Cardiac septum (tissue), 1 donor: ENCODE measurements at regions of chr5 and their contacts with region 1.

Region 1: DNA sequence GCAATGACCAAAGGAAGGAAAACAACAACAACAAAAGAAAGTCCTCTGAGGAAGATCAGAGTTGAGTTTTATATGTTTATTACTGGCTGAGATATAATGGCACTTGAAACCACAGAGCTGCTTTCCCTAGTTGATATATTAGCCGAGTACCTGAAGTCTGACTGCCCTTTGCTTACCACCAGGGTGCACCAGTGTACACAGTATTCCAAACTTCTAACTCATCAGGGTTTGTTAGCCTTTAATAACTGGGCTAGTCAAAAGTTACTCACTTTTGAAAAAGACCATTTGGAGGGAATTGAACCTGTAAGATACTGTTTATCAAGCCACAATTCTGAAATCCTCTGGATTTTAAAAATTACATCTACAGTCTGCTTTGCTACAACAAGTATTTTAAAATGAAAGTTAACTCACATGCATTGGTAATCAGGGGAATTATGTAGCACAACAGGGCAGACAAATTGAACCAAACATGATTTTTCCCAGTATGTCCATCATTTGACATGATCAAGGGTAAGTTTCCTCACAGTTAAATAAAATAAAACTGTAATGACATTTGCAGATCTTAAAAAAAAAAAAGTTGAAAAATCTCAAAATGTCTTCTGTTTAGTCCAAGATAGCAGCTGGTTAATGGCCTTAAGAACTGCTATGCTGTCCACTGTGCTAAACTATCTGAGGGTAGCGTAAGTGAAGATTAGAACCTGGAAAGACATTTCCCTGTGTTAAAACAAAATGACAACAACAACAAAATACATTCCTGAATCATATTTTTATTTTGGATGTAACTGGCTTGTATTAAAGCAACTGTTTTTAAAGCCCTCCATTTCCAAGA is 57.3 kb upstream of the C6 start:
- DNase-seq: no peak

Region 2: GRCh38 chr5:40962208-40962955 is 308.3 kb before region 1 on chr5:
- intact Hi-C with region 1: no loop called
- DNase-seq: no peak

Region 3: GRCh38 chr5:41334758-41335157 is 64.1 kb after region 1 on chr5:
- intact Hi-C with region 1: no loop called
- DNase-seq: no peak

Region 4: DNA sequence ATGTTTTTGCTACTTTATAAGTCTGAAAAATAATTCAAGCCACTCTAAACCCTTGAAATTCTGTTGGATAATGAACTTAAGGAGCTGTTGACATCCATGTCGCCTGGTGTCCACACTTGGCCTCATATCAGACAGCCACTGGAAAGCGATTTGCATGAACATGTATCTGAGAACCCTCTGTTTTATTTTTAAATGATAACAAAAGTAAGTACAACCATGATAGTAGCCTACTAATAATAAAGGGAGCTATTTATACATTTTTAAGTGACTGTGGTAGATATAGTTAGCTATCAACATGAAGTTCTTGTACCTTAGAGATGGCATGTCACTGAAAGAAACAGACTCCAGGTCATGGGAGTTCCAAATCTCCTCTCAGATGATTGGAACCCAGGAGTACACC is 186.5 kb after region 1 on chr5:
- intact Hi-C with region 1: loop called (anchors 5 kb)
- DNase-seq: no peak

Region 5: GRCh38 chr5:41510176-41510831 is 239.7 kb after region 1 on chr5 and contains the start of gene PLCXD3:
- intact Hi-C with region 1: loop called (anchors 5 kb)
- DNase-seq: peak; percentile 76
- total RNA-seq, gene PLCXD3: 63.8 TPM

Region 6: DNA sequence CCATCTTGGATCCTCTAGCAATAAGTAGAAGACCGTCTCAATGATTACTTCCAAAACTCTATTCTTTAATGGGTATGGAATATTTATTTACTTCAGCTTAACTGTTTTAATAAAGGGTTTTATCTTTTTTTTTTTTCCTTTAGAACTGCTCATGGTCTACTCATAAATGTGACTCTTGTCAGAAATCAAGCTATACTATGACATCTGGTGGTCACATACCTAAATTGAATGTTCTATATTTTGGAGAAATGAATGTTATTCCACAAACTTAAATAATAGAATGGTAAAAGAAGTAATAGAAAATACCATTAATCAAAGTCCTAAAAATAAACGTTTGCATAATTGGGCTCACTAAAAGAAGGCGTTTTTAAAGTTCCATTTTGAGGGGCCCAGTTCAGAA is 371.0 kb after region 1 on chr5:
- intact Hi-C with region 1: loop called (anchors 5 kb)
- DNase-seq: no peak